Activated B cell treated with CpG ODN at 0.5 μM for 24 hours (primary cell): ENCODE measurements at regions of chr5 and their contacts with region 1.

Region 1: GRCh38 chr5:113057557-113057984 is 81.0 kb downstream of the DCP2 start:
- DNase-seq: no peak
- ATAC-seq: no peak
- H3K4me3 Mint-ChIP-seq: no peak overlapping the region
- H3K27ac Mint-ChIP-seq: no peak overlapping the region
- H3K4me1 Mint-ChIP-seq: no peaks in the 10 kb centered on the region
- H3K27me3 Mint-ChIP-seq: no peaks in the 10 kb centered on the region
- CTCF ChIP-seq: no peak

Region 2: DNA sequence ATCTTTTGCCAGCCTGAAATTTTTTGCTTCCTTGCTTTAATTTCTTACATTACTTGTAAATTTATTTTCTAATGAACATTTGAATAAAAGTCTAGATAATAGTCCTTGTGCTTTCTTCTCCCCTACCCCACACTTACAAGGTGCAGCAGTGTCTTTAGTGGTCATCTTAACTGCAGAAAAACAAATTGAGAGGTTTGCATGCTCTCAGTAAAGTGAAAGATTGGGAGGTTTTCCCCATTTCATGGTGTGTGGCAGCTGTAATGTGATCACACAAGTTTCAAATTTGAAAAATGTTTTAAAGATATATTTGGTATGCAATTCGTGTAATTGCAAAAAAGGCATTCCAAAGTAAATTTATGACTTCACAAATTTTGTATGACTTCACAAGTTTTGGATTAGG is 305.2 kb before region 1 on chr5:
- CTCF ChIA-PET with region 1: no interaction called
- POLR2A ChIA-PET with region 1: no interaction called
- intact Hi-C with region 1: no loop called
- DNase-seq: no peak
- ATAC-seq: no peak
- H3K4me3 Mint-ChIP-seq: no peak overlapping the region
- H3K27ac Mint-ChIP-seq: no peak overlapping the region
- H3K4me1 Mint-ChIP-seq: peaks cover 16% of the 10 kb centered on the region
- H3K27me3 Mint-ChIP-seq: no peaks in the 10 kb centered on the region
- CTCF ChIP-seq: no peak

Region 3: GRCh38 chr5:112958093-112959088 is 99.2 kb before region 1 on chr5:
- CTCF ChIA-PET with region 1: no interaction called
- POLR2A ChIA-PET with region 1: no interaction called
- intact Hi-C with region 1: no loop called
- DNase-seq: no peak
- ATAC-seq: peak; percentile 65
- H3K4me3 Mint-ChIP-seq: no peak overlapping the region
- H3K27ac Mint-ChIP-seq: no peak overlapping the region
- H3K4me1 Mint-ChIP-seq: peaks cover 15% of the 10 kb centered on the region
- H3K27me3 Mint-ChIP-seq: no peaks in the 10 kb centered on the region
- CTCF ChIP-seq: no peak

Region 4: DNA sequence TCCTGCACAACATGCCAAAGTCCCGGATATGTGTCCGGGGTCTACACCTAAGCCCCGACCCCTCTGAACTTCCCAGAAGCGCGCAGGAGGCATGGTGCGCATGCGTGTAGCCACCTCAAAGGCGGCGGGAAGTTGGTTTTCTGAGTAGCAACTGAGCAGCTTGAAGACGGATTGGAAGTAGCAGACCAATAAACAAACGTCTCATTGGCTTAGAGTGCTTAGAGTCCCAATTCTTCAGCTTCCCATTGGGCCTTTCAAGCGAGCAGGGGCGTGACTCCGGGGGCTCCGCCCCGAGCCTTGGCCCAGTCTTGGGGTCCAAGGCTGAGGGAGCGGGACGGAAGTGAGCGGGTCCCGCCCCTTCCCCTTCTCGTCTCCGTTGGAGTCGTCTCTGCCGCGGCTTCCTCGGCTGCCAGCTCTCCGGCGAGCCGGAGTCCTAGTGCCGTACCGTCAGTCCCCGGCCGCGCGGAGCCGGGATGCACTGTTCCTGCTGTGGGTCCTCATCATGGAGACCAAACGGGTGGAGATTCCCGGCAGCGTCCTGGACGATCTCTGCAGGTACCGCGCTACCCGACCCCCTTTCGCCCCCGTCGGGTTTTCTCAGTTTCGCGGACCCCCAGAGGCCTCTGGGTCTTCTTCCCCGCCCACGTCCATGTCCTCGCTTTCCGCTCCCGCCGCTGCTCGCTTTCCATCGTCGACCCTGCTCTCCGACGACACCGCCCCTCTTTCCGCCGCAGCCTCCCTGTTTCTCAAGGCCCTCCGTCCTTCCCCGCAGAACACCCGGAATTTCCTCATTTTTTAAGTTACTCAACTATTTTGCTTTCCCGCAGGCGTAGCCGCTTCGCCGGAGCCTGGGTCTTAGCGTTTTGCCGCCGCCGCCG is 80.9 kb before region 1 on chr5 and contains the start of gene DCP2:
- CTCF ChIA-PET with region 1: no interaction called
- POLR2A ChIA-PET with region 1: no interaction called
- intact Hi-C with region 1: no loop called
- DNase-seq: peak; percentile 93
- ATAC-seq: peak; percentile 98
- H3K4me3 Mint-ChIP-seq: peak within 1 kb of the TSS; percentile 100
- H3K27ac Mint-ChIP-seq: peak within 1 kb of the TSS; percentile 96
- H3K4me1 Mint-ChIP-seq: peaks cover 53% of the 10 kb centered on the region
- H3K27me3 Mint-ChIP-seq: no peaks in the 10 kb centered on the region
- CTCF ChIP-seq: no peak
- total RNA-seq, gene DCP2: 53.5 and 56.0 TPM in 2 replicates

Region 5: GRCh38 chr5:113031557-113031956 is 26.0 kb before region 1 on chr5:
- CTCF ChIA-PET with region 1: no interaction called
- POLR2A ChIA-PET with region 1: interaction called, 11 read pairs
- intact Hi-C with region 1: no loop called
- DNase-seq: no peak
- ATAC-seq: no peak
- H3K4me3 Mint-ChIP-seq: no peak overlapping the region
- H3K27ac Mint-ChIP-seq: no peak overlapping the region
- H3K4me1 Mint-ChIP-seq: no peaks in the 10 kb centered on the region
- H3K27me3 Mint-ChIP-seq: no peaks in the 10 kb centered on the region
- CTCF ChIP-seq: no peak

Region 6: GRCh38 chr5:113330533-113331208 is 273.1 kb after region 1 on chr5:
- CTCF ChIA-PET with region 1: no interaction called
- POLR2A ChIA-PET with region 1: no interaction called
- intact Hi-C with region 1: no loop called
- DNase-seq: no peak
- ATAC-seq: peak; percentile 57
- H3K4me3 Mint-ChIP-seq: no peak overlapping the region
- H3K27ac Mint-ChIP-seq: no peak overlapping the region
- H3K4me1 Mint-ChIP-seq: peaks cover 6% of the 10 kb centered on the region
- H3K27me3 Mint-ChIP-seq: peaks cover 4% of the 10 kb centered on the region
- CTCF ChIP-seq: no peak